CD4-positive, alpha-beta memory T cell (primary cell): ENCODE measurements at regions of chr5 and their contacts with region 1.

Region 1: DNA sequence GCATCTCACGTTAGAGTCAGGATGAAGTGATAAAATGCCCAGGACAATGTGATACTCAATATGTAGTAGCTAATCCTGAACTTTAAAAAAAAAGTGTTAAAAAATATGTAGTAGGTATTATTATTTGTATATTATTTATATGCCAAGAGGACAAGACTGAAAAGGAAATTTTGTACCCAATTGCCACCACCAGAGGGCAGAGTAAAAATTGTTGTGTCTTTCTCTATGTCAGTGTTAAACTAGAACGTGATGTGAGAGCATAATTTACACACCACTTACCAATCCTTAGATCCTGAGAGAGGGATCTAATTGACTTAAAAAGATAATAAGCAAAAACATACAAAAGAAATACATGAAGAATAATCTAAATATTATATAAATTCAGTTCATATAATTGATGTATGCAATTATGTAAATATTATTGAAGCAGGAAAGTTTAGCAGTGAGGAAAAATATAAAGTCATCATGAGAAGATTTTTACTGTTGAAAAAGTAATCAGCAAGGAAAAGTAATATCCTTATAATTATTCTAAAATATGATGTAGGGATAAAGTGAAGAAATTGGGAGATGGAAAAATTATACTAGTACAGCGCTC is 288.9 kb downstream of the RAB3C start:
- DNase-seq: peak in 4 of 5 donors; percentile 5 to 32 (median 26)
- H3K4me3 ChIP-seq: no peak overlapping the region
- H3K4me3 Mint-ChIP-seq: no peak overlapping the region
- H3K27ac ChIP-seq: no peak overlapping the region
- H3K27ac Mint-ChIP-seq: no peak overlapping the region
- H3K4me1 ChIP-seq: no peaks in the 10 kb centered on the region
- H3K4me1 Mint-ChIP-seq: no peaks in the 10 kb centered on the region
- H3K27me3 ChIP-seq: no peaks in the 10 kb centered on the region
- H3K27me3 Mint-ChIP-seq: peaks cover 10 to 11% of the 10 kb centered on the region in 2 donors

Region 2: GRCh38 chr5:58857609-58858008 is 14.1 kb before region 1 on chr5:
- CTCF ChIA-PET with region 1: interaction called, 10 read pairs
- POLR2A ChIA-PET with region 1: no interaction called
- intact Hi-C with region 1: no loop called
- DNase-seq: no peak
- H3K4me3 ChIP-seq: no peak overlapping the region
- H3K4me3 Mint-ChIP-seq: no peak overlapping the region
- H3K27ac ChIP-seq: no peak overlapping the region
- H3K27ac Mint-ChIP-seq: no peak overlapping the region
- H3K4me1 ChIP-seq: no peaks in the 10 kb centered on the region
- H3K4me1 Mint-ChIP-seq: no peaks in the 10 kb centered on the region
- H3K27me3 ChIP-seq: no peaks in the 10 kb centered on the region
- H3K27me3 Mint-ChIP-seq: peaks cover 8 to 21% of the 10 kb centered on the region in 2 donors

Region 3: GRCh38 chr5:58891971-58892343 is 20.2 kb after region 1 on chr5:
- CTCF ChIA-PET with region 1: interaction called, 41 read pairs
- POLR2A ChIA-PET with region 1: no interaction called
- intact Hi-C with region 1: no loop called
- DNase-seq: no peak
- H3K4me3 ChIP-seq: no peak overlapping the region
- H3K4me3 Mint-ChIP-seq: peak overlapping the region in 1 of 8 donors; percentile 76
- H3K27ac ChIP-seq: no peak overlapping the region
- H3K27ac Mint-ChIP-seq: no peak overlapping the region
- H3K4me1 ChIP-seq: peaks cover 20% of the 10 kb centered on the region
- H3K4me1 Mint-ChIP-seq: peaks cover 12 to 34% (median 19%) of the 10 kb centered on the region in 4 donors
- H3K27me3 ChIP-seq: no peaks in the 10 kb centered on the region
- H3K27me3 Mint-ChIP-seq: peaks cover 1% of the 10 kb centered on the region in 2 donors

Region 4: DNA sequence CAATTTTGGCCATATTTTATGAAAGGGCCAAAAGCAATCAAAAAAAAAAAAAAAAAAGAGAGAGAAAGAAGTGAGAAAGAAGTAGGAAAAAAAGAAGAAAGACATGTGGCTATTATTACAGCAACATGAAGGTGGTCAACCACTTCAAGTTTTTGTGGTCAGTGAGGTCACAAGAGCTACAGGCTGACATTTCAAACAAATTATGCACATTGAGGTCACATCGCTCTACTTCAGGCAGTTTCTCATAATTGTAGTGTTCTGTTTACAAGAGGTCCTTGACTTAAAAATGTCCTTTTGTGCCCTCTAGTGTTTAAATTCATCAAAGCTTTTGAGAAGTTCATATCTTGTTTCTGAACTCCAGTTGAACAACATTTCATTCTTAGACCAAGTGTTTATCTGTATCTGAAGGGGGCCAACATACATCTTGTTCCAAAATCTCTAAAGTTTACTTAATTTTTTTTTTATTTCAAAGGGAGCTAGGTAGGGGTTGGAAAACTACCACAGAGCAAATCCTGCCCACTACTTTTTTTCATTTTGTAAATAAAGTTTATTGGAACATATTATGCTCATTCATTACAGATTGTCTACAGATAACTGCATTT is 508.7 kb after region 1 on chr5:
- CTCF ChIA-PET with region 1: interaction called, 5 read pairs
- POLR2A ChIA-PET with region 1: no interaction called
- intact Hi-C with region 1: loop called (anchors 2 kb)
- DNase-seq: peak in 4 of 5 donors; percentile 27 to 41 (median 34)
- H3K4me3 ChIP-seq: no peak overlapping the region
- H3K4me3 Mint-ChIP-seq: no peak overlapping the region
- H3K27ac ChIP-seq: no peak overlapping the region
- H3K27ac Mint-ChIP-seq: no peak overlapping the region
- H3K4me1 ChIP-seq: no peaks in the 10 kb centered on the region
- H3K4me1 Mint-ChIP-seq: peaks cover 0 to 4% (median 3%) of the 10 kb centered on the region in 4 donors
- H3K27me3 ChIP-seq: no peaks in the 10 kb centered on the region
- H3K27me3 Mint-ChIP-seq: peaks cover 0 to 3% of the 10 kb centered on the region in 2 donors